CD4-positive, alpha-beta T cell (primary cell): ENCODE measurements at regions of chr10 and their contacts with region 1.

Region 1: GRCh38 chr10:92592761-92593618 is at the start of gene KIF11:
- DNase-seq: peak; percentile 91 to 98 (median 96)
- ATAC-seq: peak; percentile 81
- H3K4me3 ChIP-seq: peak within 1 kb of the TSS; percentile 75
- H3K4me3 Mint-ChIP-seq: peak within 1 kb of the TSS; percentile 99
- H3K27ac ChIP-seq: peak within 1 kb of the TSS; percentile 84 to 89
- H3K27ac Mint-ChIP-seq: peak within 1 kb of the TSS; percentile 99
- H3K4me1 ChIP-seq: peaks cover 38% of the 10 kb centered on the region
- H3K4me1 Mint-ChIP-seq: peaks cover 29% of the 10 kb centered on the region
- H3K27me3 ChIP-seq: no peaks in the 10 kb centered on the region
- H3K27me3 Mint-ChIP-seq: no peaks in the 10 kb centered on the region
- CTCF ChIP-seq: no peak
- total RNA-seq, gene KIF11: 0.38 to 0.47 TPM

Region 2: DNA sequence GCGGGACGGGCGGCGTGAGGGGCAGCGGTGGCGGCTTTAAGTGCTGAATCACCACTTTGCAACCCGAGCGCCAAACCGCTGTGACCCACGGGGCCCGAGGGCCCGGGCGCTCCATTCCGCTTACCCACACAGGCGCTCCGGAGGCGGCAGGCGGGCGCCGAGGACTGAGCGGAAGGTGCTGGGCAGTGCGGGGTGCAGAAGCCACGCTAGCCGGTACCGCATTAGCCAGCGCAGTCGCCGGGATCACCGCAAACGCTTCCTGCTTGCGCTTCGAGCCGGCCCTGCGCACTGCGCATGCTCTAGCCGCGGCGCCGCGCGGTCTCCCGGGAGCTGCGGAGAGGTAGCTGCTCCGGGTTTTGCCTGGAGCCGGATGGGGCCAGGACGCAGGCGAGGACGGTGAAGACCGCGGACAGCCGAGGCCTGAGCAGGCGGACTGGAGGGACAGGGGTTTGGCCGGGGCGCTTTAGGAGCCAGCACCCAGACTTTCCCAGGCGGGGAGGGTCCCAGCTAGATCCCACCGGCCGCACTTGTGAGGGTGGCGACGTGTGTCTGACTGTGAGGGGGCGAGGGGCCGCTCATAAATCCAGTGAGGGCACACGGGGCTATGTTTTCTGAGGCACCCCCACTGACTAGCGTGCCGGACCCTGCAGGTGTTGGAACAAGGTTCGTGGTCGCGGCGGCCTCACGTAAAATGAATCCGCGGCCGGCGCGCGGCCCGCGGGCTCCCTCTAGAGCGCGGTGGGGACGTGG is 19.0 kb before region 1 on chr10 and contains the start of gene IDE:
- CTCF ChIA-PET with region 1: interaction called, 30 read pairs
- POLR2A ChIA-PET with region 1: interaction called, 103 read pairs
- intact Hi-C with region 1: loop called (anchors 2 kb)
- DNase-seq: peak; percentile 64 to 91 (median 76)
- ATAC-seq: peak; percentile 73
- H3K4me3 ChIP-seq: peak within 1 kb of the TSS; percentile 96
- H3K4me3 Mint-ChIP-seq: peak within 1 kb of the TSS; percentile 93
- H3K27ac ChIP-seq: peak within 1 kb of the TSS; percentile 77
- H3K27ac Mint-ChIP-seq: peak within 1 kb of the TSS; percentile 88
- H3K4me1 ChIP-seq: peaks cover 19% of the 10 kb centered on the region
- H3K4me1 Mint-ChIP-seq: peaks cover 40% of the 10 kb centered on the region
- H3K27me3 ChIP-seq: no peaks in the 10 kb centered on the region
- H3K27me3 Mint-ChIP-seq: no peaks in the 10 kb centered on the region
- CTCF ChIP-seq: peak; percentile 91
- total RNA-seq, gene IDE: 15.2 to 17.8 TPM

Region 3: GRCh38 chr10:93211991-93212390 is 619.0 kb after region 1 on chr10:
- CTCF ChIA-PET with region 1: no interaction called
- POLR2A ChIA-PET with region 1: no interaction called
- intact Hi-C with region 1: no loop called
- DNase-seq: no peak
- ATAC-seq: no peak
- H3K4me3 ChIP-seq: no peak overlapping the region
- H3K4me3 Mint-ChIP-seq: no peak overlapping the region
- H3K27ac ChIP-seq: no peak overlapping the region
- H3K27ac Mint-ChIP-seq: no peak overlapping the region
- H3K4me1 ChIP-seq: no peaks in the 10 kb centered on the region
- H3K4me1 Mint-ChIP-seq: no peaks in the 10 kb centered on the region
- H3K27me3 ChIP-seq: no peaks in the 10 kb centered on the region
- H3K27me3 Mint-ChIP-seq: no peaks in the 10 kb centered on the region
- CTCF ChIP-seq: no peak

Region 4: GRCh38 chr10:93591065-93591808 is 998.2 kb after region 1 on chr10:
- CTCF ChIA-PET with region 1: no interaction called
- POLR2A ChIA-PET with region 1: no interaction called
- intact Hi-C with region 1: no loop called
- DNase-seq: no peak
- ATAC-seq: no peak
- H3K4me3 ChIP-seq: no peak overlapping the region
- H3K4me3 Mint-ChIP-seq: no peak overlapping the region
- H3K27ac ChIP-seq: no peak overlapping the region
- H3K27ac Mint-ChIP-seq: no peak overlapping the region
- H3K4me1 ChIP-seq: no peaks in the 10 kb centered on the region
- H3K4me1 Mint-ChIP-seq: no peaks in the 10 kb centered on the region
- H3K27me3 ChIP-seq: peaks cover 0 to 2% of the 10 kb centered on the region in 2 experiments
- H3K27me3 Mint-ChIP-seq: peaks cover 3% of the 10 kb centered on the region
- CTCF ChIP-seq: no peak